Posterior cingulate gyrus (tissue), 11 donors: ENCODE measurements at regions of chr4 and their contacts with region 1.

Region 1: GRCh38 chr4:48388525-48389154 is 47.3 kb downstream of the SLAIN2 start:
- DNase-seq: no peak

Region 2: DNA sequence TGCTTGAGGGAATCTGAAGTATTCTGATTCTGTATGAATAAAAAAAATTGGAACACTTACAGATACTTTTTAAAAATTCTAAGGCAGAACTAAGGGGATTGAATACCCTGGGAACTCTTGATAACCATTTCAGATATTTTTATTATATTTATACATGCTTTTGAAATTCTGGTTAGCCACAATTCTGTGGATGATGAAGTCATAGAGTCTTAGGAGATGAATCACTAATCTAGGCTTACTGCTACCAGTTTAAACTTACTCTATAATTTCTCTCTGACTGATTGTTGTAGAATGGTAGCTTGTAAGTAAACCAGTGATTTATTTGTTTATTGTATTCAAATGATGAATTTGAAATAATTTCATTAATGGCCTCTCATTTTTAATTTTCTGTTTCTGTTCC is 58.7 kb before region 1 on chr4:
- intact Hi-C with region 1: loop called (anchors 10 kb)
- DNase-seq: no peak